ENCODE measurements at regions of chr3 and their contacts with region 1.

Region 1: DNA sequence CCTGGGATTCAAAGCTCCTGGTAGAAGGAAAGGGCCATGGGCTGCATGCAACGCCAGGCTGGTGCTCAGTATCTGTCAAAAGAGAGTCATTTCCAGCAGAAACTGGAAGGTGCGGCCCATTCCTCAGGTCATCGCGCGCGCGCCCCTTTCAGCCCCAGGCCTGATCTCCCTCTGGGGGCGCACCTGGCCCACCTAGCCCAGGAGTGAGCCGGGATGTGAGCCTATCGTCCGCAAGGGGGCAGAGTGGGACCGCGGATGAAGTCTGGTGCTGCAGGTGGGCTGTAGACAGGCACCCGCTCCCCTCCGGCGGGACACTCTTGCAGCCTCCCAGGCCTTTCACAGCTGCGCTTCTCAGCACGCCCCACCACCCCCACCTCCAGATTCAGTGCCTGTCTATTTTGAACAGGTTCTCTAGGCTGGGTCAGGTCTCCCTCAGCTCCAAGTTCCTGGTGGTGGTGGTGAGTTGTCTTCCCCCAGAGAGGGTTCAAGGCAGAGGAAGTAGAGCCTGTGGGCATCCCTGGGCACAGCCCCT is 5.8 kb upstream of the RPL29 start:
- DNase-seq: peak; percentile 97
- ATAC-seq: peak; percentile 76
- H3K4me3 Mint-ChIP-seq: no peak overlapping the region
- H3K27ac Mint-ChIP-seq: peak overlapping the region; percentile 86
- H3K4me1 Mint-ChIP-seq: peaks cover 42% of the 10 kb centered on the region
- H3K27me3 Mint-ChIP-seq: no peaks in the 10 kb centered on the region
- CTCF ChIP-seq: peak; percentile 90

Region 2: DNA sequence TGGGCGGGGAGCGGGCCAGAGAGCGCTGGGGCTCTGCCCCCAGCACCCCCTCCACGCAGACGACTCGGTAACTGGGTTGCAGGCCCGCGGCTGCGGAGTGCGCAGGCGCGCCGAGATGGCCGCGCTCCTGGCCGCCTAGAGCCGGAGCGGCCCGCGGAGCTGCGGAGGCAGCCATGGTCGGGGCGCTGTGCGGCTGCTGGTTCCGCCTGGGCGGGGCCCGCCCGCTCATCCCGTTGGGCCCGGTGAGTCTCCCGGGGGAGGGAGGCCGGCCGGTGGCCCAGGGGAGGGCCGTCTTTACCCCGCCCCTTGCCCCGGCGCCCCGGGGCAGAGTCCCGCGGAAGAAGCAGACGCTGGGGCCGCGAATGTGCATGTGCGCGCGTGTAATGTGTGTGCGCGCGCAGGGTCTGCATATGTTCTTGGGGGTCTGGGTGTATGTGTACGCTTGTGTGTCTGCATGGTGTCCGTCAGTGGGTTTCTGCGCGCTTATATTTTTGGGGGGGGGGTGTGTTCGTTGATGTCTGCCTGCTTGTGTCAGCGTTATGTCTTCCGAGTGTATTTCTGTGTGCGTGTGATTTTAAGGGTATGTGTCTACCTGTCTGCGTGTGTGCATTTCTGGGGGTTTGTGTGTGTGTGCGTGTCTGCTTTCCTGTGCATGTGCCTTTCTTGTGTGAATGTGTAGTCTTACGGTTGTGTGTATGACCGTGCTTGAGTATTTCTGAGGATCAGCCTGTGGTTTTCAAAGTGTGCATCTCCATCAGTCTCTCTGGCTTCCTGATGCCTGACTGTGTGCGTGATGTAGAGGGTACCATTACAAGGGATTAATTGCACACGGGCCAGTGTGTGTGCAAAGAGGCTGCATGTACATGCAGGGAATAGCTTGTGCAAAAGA is 26.3 kb before region 1 on chr3 and contains the start of gene ABHD14A:
- CTCF ChIA-PET with region 1: interaction called, 17 read pairs
- POLR2A ChIA-PET with region 1: interaction called, 5 read pairs
- DNase-seq: peak; percentile 69
- ATAC-seq: peak; percentile 70
- H3K4me3 Mint-ChIP-seq: peak within 1 kb of the TSS; percentile 79
- H3K27ac Mint-ChIP-seq: no peak within 1 kb of the TSS
- H3K4me1 Mint-ChIP-seq: peaks cover 22% of the 10 kb centered on the region
- H3K27me3 Mint-ChIP-seq: peaks cover 43% of the 10 kb centered on the region
- CTCF ChIP-seq: no peak
- total RNA-seq, gene ABHD14A: 3.8 to 5.9 TPM (median 4.5 TPM) in 3 replicates

Region 3: DNA sequence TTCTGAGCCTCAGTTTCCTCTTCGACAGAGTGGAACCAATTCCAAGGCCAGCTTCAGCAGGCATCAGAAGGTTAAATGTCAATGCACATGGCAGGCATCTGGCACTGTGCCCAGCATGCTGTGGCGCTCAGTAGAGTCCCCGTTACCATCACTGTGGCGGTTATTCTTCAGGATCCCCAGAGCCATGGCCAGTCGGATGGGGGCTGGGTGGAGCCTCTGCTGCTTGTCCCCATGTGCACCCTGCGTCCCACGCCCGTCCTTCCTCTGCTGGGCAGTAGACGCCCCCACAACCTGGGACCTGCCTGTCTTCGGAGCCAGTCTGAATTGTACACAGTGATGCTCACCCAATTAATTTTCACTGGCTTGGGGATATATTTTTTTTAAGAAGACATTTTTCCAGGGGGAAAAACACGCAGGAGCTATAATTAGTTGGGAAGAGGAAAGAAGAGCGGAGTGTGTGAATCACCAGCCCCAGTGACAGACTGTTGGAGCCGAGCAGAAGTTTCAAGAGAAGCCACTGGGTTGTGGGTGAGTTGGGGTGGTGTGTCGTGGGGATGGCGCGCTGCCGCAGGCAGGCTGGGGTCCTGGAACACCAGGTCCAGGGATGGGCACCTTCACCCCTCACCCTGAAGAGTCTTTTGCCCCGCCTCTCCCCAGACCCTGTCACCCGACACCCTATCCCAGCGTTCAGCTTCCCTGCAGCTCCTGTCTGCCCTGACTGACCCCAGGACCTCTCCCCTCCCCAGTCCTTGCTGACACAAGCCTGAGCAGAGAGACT is 21.0 kb after region 1 on chr3:
- CTCF ChIA-PET with region 1: interaction called, 124 read pairs
- POLR2A ChIA-PET with region 1: no interaction called
- DNase-seq: no peak
- ATAC-seq: peak; percentile 84
- H3K4me3 Mint-ChIP-seq: no peak overlapping the region
- H3K27ac Mint-ChIP-seq: no peak overlapping the region
- H3K4me1 Mint-ChIP-seq: peaks cover 9% of the 10 kb centered on the region
- H3K27me3 Mint-ChIP-seq: no peaks in the 10 kb centered on the region
- CTCF ChIP-seq: no peak

Region 4: DNA sequence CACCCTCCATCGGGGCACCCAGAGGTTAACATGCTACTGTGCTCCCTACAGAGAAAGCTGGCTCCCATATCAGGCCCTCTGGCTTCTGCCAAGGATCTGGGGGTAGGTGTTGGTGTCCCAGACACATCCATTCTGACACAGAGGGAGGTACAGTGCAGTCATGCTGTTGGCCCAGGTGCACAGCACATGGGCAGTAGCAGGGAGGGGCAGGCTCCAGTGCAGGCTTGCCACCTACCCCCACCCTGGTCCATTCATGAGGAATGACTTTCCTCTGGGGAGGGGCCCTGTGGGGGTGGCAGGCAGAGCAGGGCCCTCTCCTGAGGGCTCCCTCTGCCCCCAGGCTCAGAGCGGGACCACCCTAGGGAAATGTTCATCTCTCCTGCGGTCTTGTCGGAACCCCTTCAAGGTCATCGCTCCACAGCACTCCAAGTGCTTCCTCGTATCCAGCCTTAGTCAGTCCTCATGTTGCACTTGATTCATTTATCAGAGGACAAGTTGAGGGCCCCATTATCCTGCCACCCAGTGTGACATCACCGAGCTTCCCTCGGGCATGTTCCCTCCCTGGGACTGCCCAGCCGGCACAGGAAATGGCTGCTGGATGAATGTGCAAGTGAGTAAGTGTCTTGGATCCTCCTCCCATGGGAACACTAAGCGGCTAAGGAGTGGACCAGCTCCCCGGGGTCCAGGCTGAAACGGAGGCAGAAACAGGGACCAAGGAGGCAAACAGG is 44.8 kb after region 1 on chr3:
- CTCF ChIA-PET with region 1: interaction called, 382 read pairs
- POLR2A ChIA-PET with region 1: interaction called, 4 read pairs
- DNase-seq: no peak
- ATAC-seq: no peak
- H3K4me3 Mint-ChIP-seq: no peak overlapping the region
- H3K27ac Mint-ChIP-seq: peak overlapping the region; percentile 89
- H3K4me1 Mint-ChIP-seq: peaks cover 11% of the 10 kb centered on the region
- H3K27me3 Mint-ChIP-seq: no peaks in the 10 kb centered on the region
- CTCF ChIP-seq: no peak

Region 5: DNA sequence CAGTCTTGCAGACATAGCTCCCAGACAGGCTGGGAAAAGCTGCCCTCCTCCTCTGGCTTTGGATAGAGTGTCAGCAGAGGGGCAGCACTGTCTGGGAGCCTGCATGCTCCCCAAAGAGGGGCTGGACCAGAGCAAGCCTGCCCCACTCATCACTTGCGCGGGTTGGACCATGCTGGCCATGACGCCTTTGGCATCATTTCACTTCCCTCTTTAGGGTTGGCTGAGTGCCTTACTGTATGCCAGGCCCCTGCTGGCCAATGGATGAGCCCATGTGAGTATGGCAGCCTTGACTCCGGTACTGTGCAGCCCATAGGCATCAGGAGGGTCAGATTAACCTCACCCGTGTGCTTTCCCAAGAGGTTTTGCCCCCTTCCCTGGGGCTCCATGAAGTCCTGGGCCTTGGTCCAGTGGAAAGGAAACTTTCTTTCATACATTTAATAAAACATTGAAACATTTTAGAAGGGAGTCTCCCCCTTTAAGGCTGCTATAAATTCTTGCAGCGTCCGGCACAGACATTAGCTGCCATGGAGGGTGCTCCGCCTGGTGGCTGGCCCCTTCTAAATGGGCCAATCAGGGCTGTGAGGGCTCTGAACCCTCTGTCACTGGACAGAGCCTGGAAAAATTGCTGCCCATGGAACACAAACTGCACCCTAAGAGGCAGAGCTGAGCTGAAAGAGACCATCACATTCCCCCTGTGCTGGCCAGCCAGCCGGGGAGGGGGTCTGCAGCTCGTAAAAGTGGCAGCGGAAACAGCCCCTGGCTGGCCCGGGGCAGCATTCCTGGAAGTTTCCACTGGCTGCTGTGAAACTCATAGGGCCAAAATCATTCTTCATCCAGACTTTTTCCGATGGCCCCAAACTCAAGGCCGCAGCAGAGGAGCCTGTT is 75.6 kb after region 1 on chr3:
- CTCF ChIA-PET with region 1: interaction called, 23 read pairs
- POLR2A ChIA-PET with region 1: no interaction called
- DNase-seq: no peak
- ATAC-seq: no peak; the same call in 1 of the 2 replicates
- H3K4me3 Mint-ChIP-seq: no peak overlapping the region
- H3K27ac Mint-ChIP-seq: no peak overlapping the region
- H3K4me1 Mint-ChIP-seq: no peaks in the 10 kb centered on the region
- H3K27me3 Mint-ChIP-seq: no peaks in the 10 kb centered on the region
- CTCF ChIP-seq: no peak

Region 6: GRCh38 chr3:52123106-52123725 is 121.7 kb after region 1 on chr3:
- CTCF ChIA-PET with region 1: interaction called, 61 read pairs
- POLR2A ChIA-PET with region 1: no interaction called
- DNase-seq: peak; percentile 84
- ATAC-seq: peak; percentile 95
- H3K4me3 Mint-ChIP-seq: no peak overlapping the region
- H3K27ac Mint-ChIP-seq: no peak overlapping the region
- H3K4me1 Mint-ChIP-seq: no peaks in the 10 kb centered on the region
- H3K27me3 Mint-ChIP-seq: no peaks in the 10 kb centered on the region
- CTCF ChIP-seq: peak; percentile 96

Region 7: GRCh38 chr3:52220380-52221026 is 219.0 kb after region 1 on chr3:
- CTCF ChIA-PET with region 1: interaction called, 14 read pairs
- POLR2A ChIA-PET with region 1: no interaction called
- DNase-seq: peak; percentile 92
- ATAC-seq: peak; percentile 84
- H3K4me3 Mint-ChIP-seq: no peak overlapping the region
- H3K27ac Mint-ChIP-seq: no peak overlapping the region
- H3K4me1 Mint-ChIP-seq: peaks cover 7% of the 10 kb centered on the region
- H3K27me3 Mint-ChIP-seq: no peaks in the 10 kb centered on the region
- CTCF ChIP-seq: peak; percentile 95

Measured in WTC11 (cell line).